Esophagus muscularis mucosa (tissue), 4 donors: ENCODE measurements at regions of chr17 and their contacts with region 1.

Region 1: GRCh38 chr17:38752119-38752929 is at the start of gene PSMB3:
- DNase-seq: peak; percentile 100
- H3K4me3 ChIP-seq: peak within 1 kb of the TSS; percentile 84 to 97 (median 92)
- H3K27ac ChIP-seq: peak within 1 kb of the TSS; percentile 87 to 97 (median 94)
- H3K4me1 ChIP-seq: peaks cover 45 to 75% (median 63%) of the 10 kb centered on the region in 4 donors
- H3K27me3 ChIP-seq: peaks cover 0 to 6% (median 0%) of the 10 kb centered on the region in 4 donors
- CTCF ChIP-seq: no peak
- EP300 ChIP-seq: no peak
- POLR2A ChIP-seq: no peak
- total RNA-seq, gene PSMB3: 122 to 158 (median 137) TPM

Region 2: GRCh38 chr17:38702166-38702899 is 50.0 kb before region 1 on chr17:
- intact Hi-C with region 1: loop called (anchors 5 kb)
- DNase-seq: peak; percentile 97
- H3K4me3 ChIP-seq: peak overlapping the region; percentile 67 to 99 (median 90)
- H3K27ac ChIP-seq: peak overlapping the region; percentile 94 to 98 (median 96)
- H3K4me1 ChIP-seq: peaks cover 21 to 48% (median 45%) of the 10 kb centered on the region in 4 donors
- H3K27me3 ChIP-seq: no peaks in the 10 kb centered on the region
- CTCF ChIP-seq: peak in 1 of 3 experiments; percentile 21
- EP300 ChIP-seq: no peak
- POLR2A ChIP-seq: peak; percentile 85

Region 3: GRCh38 chr17:38799378-38800236 is 47.3 kb after region 1 on chr17 and contains the start of gene PIP4K2B:
- intact Hi-C with region 1: loop called (anchors 5 kb)
- DNase-seq: peak; percentile 99
- H3K4me3 ChIP-seq: peak within 1 kb of the TSS; percentile 78 to 95 (median 92)
- H3K27ac ChIP-seq: peak within 1 kb of the TSS; percentile 97 to 100 (median 98)
- H3K4me1 ChIP-seq: peaks cover 29 to 42% (median 42%) of the 10 kb centered on the region in 4 donors
- H3K27me3 ChIP-seq: no peaks in the 10 kb centered on the region
- CTCF ChIP-seq: peak in 1 of 3 experiments; percentile 13
- EP300 ChIP-seq: no peak
- POLR2A ChIP-seq: no peak
- total RNA-seq, gene PIP4K2B: 39.5 to 72.1 (median 53.2) TPM